GM12878 (cell line): ENCODE measurements at regions of chr1 and their contacts with region 1.

Region 1: DNA sequence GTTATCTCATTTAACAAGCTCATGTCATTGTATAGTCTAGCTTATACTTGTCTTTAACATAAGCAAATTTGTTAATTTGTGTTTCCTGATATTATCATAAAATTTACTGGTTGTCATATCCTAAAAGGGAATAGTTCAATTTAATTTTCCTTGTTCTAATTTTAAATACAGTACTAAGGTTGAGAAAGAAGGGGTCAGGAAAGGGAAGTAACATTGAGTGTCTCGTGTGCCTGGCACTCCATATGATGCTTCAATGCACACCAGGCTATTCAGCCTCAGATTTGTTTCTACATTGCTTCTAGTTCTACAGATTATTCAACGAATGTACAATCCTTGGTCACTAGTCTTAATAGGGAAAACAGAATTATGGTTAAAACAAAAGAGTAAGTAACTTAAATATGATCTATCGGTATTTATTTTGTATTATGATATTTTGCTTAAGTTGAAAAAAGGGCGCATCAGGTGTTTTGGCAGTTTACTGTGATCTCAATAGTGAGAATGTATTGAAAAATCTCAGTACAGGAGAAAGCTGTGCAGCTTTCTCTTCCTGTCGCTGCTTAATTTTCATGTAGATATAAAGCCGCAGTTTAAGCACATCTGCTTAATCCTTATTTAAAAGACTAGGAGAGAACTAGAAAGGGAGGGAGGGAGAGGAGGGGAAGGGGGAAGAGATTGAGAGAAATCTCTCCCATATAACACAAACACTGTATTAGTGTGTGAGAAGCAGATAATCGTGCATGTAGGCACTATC is 13.0 kb downstream of the PTPRC start:
- DNase-seq: no peak
- ATAC-seq: peak; percentile 29
- H3K4me3 ChIP-seq: no peak overlapping the region
- H3K27ac ChIP-seq: peak overlapping the region; percentile 20; the same call in 1 of the 2 replicates
- H3K4me1 ChIP-seq: peaks cover 32% of the 10 kb centered on the region
- H3K27me3 ChIP-seq: no peaks in the 10 kb centered on the region
- CTCF ChIP-seq: no peak
- EP300 ChIP-seq: no peak
- POLR2A ChIP-seq: no peak
- RAD21 ChIP-seq: no peak

Region 2: DNA sequence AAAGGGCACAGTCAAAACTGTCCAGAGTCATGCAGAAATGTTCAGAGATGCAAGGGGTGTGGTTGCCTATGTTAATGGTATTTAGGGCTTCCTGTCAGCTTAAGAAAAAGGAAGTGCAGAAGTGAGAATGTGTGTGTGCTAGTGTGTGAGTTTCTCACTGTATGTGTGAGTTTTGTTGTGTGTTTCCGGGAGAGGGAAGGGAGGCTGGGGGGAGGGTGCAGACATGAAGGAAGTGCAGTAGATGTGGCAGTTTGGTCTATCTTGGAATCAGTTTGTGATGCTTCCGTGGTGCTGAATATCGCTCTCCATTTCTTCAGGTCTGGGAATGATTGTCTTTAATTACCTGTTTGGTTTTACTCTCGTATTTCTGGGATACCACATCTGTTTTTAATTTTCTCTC is 94.9 kb before region 1 on chr1:
- CTCF ChIA-PET with region 1: no interaction called
- POLR2A ChIA-PET with region 1: no interaction called
- RAD21 ChIA-PET with region 1: no interaction called
- SMC1A ChIA-PET with region 1: interaction called, 4 read pairs
- in situ Hi-C with region 1: no loop called
- intact Hi-C with region 1: loop called (anchors 5 kb)
- DNase-seq: peak; percentile 71
- ATAC-seq: peak; percentile 95
- H3K4me3 ChIP-seq: no peak overlapping the region
- H3K27ac ChIP-seq: no peak overlapping the region; the same call in 1 of the 2 replicates
- H3K4me1 ChIP-seq: peaks cover 4% of the 10 kb centered on the region; the same call in 1 of the 2 replicates
- H3K27me3 ChIP-seq: no peaks in the 10 kb centered on the region
- CTCF ChIP-seq: no peak
- EP300 ChIP-seq: 0 out of 4 replicates have a peak, but pooled peaks of 1 of the 2 experiments have one; percentile 43
- POLR2A ChIP-seq: no peak
- RAD21 ChIP-seq: 0 out of 2 replicates have a peak, but pooled peaks have one; percentile 13